ENCODE measurements at regions of chr11 and their contacts with region 1.

Region 1: DNA sequence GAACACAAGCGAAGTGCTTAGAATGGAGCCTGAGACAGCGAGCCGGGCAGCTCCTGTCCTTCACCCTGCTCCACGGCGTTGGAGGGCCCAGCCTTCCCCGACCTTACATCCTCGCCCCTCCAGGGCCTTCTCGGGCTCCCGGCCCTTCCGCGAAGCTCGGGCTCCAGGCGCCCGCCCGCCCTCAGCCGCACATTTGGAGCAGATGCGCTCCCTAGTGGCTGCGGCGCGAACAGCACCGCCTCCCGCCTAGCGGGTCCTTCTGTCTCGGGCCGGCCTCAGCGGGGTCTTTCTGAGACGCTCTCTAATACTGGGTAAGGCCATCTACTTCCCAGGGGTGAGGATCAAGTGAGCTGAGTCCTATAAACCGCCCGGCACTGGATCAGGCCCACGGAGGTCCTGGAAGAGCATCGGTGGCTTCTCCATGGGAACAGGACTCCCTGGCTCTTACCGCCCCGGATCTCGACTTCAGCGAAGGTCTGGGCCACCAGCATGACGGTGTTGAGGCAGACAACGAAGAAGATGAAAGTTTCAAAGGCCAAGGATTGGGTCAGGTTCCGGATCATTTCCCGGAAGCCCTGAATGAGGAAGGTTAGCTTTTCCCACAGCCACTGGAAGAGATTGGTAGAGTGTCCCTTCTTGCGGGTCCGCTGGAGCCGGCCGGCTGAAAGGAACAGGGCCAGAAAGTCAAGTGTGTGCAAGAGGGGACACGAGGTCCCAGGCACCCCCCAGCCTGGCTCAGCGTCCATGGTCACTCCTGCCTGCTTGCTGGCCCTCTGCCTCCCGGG is 3.7 kb downstream of the CATSPER1 start:
- DNase-seq: peak; percentile 63 to 86 (median 80)
- ATAC-seq: peak; percentile 99
- H3K4me3 ChIP-seq: peak overlapping the region in 1 of 2 experiments; percentile 4
- H3K4me3 Mint-ChIP-seq: peak overlapping the region; percentile 43
- H3K27ac ChIP-seq: no peak overlapping the region
- H3K27ac Mint-ChIP-seq: no peak overlapping the region
- H3K4me1 ChIP-seq: peaks cover 7% of the 10 kb centered on the region
- H3K4me1 Mint-ChIP-seq: peaks cover 5% of the 10 kb centered on the region
- H3K27me3 ChIP-seq: no peaks in the 10 kb centered on the region
- H3K27me3 Mint-ChIP-seq: peaks cover 3% of the 10 kb centered on the region
- CTCF ChIP-seq: peak; percentile 97

Region 2: GRCh38 chr11:66008468-66009101 is 14.0 kb before region 1 on chr11:
- CTCF ChIA-PET with region 1: interaction called, 25 read pairs
- POLR2A ChIA-PET with region 1: no interaction called
- intact Hi-C with region 1: no loop called
- DNase-seq: no peak
- ATAC-seq: no peak
- H3K4me3 ChIP-seq: no peak overlapping the region
- H3K4me3 Mint-ChIP-seq: no peak overlapping the region
- H3K27ac ChIP-seq: no peak overlapping the region
- H3K27ac Mint-ChIP-seq: no peak overlapping the region
- H3K4me1 ChIP-seq: peaks cover 4% of the 10 kb centered on the region
- H3K4me1 Mint-ChIP-seq: peaks cover 9% of the 10 kb centered on the region
- H3K27me3 ChIP-seq: peaks cover 13 to 18% of the 10 kb centered on the region in 2 experiments
- H3K27me3 Mint-ChIP-seq: peaks cover 9% of the 10 kb centered on the region
- CTCF ChIP-seq: no peak

Region 3: DNA sequence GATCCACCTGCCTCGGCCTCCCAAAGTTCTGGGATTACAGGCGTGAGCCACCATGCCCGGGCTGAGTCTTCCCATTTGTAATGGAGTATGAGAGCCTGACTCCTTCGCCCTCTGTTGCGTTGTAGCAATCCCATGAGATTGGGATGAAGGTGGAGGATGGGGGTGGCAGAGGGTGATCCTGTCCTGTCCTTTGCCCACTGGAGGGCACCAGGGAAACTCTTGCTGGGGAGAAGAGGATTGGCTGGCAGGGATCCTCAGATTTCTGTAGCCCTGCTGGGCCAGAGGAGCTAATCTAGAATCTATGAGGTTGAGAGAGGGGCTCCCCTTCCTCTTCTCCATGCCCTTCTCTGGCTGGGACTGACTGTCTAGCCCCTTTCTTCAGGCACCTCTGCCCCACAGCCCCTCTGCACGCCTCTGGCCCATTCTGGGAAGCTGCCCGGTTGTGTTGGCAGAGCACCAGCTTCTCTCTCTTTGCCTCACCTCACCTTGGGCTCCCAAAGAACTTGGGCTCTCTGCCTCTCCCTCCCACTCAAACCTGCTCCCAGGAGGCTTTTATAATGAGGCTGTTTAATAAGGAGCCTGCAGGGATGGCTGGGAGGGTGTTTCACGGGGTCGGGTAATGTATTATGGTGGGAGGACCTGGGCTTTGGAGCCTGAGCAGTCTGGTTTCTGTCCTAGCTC is 13.2 kb after region 1 on chr11:
- CTCF ChIA-PET with region 1: interaction called, 13 read pairs
- POLR2A ChIA-PET with region 1: no interaction called
- intact Hi-C with region 1: no loop called
- DNase-seq: no peak
- ATAC-seq: no peak
- H3K4me3 ChIP-seq: no peak overlapping the region
- H3K4me3 Mint-ChIP-seq: no peak overlapping the region
- H3K27ac ChIP-seq: no peak overlapping the region
- H3K27ac Mint-ChIP-seq: no peak overlapping the region
- H3K4me1 ChIP-seq: no peaks in the 10 kb centered on the region
- H3K4me1 Mint-ChIP-seq: no peaks in the 10 kb centered on the region
- H3K27me3 ChIP-seq: no peaks in the 10 kb centered on the region
- H3K27me3 Mint-ChIP-seq: peaks cover 9% of the 10 kb centered on the region
- CTCF ChIP-seq: no peak

Region 4: GRCh38 chr11:66045177-66045639 is 22.6 kb after region 1 on chr11:
- CTCF ChIA-PET with region 1: interaction called, 19 read pairs
- POLR2A ChIA-PET with region 1: no interaction called
- intact Hi-C with region 1: no loop called
- DNase-seq: peak; percentile 60 to 90 (median 87)
- ATAC-seq: peak; percentile 98
- H3K4me3 ChIP-seq: no peak overlapping the region
- H3K4me3 Mint-ChIP-seq: no peak overlapping the region
- H3K27ac ChIP-seq: no peak overlapping the region
- H3K27ac Mint-ChIP-seq: no peak overlapping the region
- H3K4me1 ChIP-seq: peaks cover 13% of the 10 kb centered on the region
- H3K4me1 Mint-ChIP-seq: peaks cover 12% of the 10 kb centered on the region
- H3K27me3 ChIP-seq: no peaks in the 10 kb centered on the region
- H3K27me3 Mint-ChIP-seq: no peaks in the 10 kb centered on the region
- CTCF ChIP-seq: peak; percentile 83

Measured in CD8-positive, alpha-beta T cell (primary cell).